CD4-positive, alpha-beta T cell (primary cell): ENCODE measurements at regions of chr4 and their contacts with region 1.

Region 1: GRCh38 chr4:3106339-3107186 is 32.1 kb downstream of the HTT start:
- DNase-seq: peak; percentile 64 to 92 (median 80)
- ATAC-seq: peak; percentile 99
- H3K4me3 ChIP-seq: no peak overlapping the region
- H3K4me3 Mint-ChIP-seq: no peak overlapping the region
- H3K27ac ChIP-seq: no peak overlapping the region
- H3K27ac Mint-ChIP-seq: peak overlapping the region; percentile 1
- H3K4me1 ChIP-seq: peaks cover 5% of the 10 kb centered on the region
- H3K4me1 Mint-ChIP-seq: peaks cover 7% of the 10 kb centered on the region
- H3K27me3 ChIP-seq: no peaks in the 10 kb centered on the region
- H3K27me3 Mint-ChIP-seq: no peaks in the 10 kb centered on the region
- CTCF ChIP-seq: peak; percentile 99

Region 2: GRCh38 chr4:3136453-3136852 is 29.9 kb after region 1 on chr4:
- CTCF ChIA-PET with region 1: interaction called, 4 read pairs
- POLR2A ChIA-PET with region 1: no interaction called
- intact Hi-C with region 1: loop called in 1 of 2 experiments (anchors 2 kb)
- DNase-seq: no peak
- ATAC-seq: no peak
- H3K4me3 ChIP-seq: no peak overlapping the region
- H3K4me3 Mint-ChIP-seq: no peak overlapping the region
- H3K27ac ChIP-seq: no peak overlapping the region
- H3K27ac Mint-ChIP-seq: no peak overlapping the region
- H3K4me1 ChIP-seq: no peaks in the 10 kb centered on the region
- H3K4me1 Mint-ChIP-seq: no peaks in the 10 kb centered on the region
- H3K27me3 ChIP-seq: no peaks in the 10 kb centered on the region
- H3K27me3 Mint-ChIP-seq: no peaks in the 10 kb centered on the region
- CTCF ChIP-seq: peak; percentile 38

Region 3: GRCh38 chr4:3193531-3194203 is 87.1 kb after region 1 on chr4:
- CTCF ChIA-PET with region 1: no interaction called
- POLR2A ChIA-PET with region 1: no interaction called
- intact Hi-C with region 1: loop called in 1 of 2 experiments (anchors 10 kb)
- DNase-seq: peak in 3 of 14 experiments; percentile 47 to 60 (median 48)
- ATAC-seq: peak; percentile 38
- H3K4me3 ChIP-seq: no peak overlapping the region
- H3K4me3 Mint-ChIP-seq: peak overlapping the region; percentile 16
- H3K27ac ChIP-seq: no peak overlapping the region
- H3K27ac Mint-ChIP-seq: peak overlapping the region; percentile 9
- H3K4me1 ChIP-seq: peaks cover 53% of the 10 kb centered on the region
- H3K4me1 Mint-ChIP-seq: peaks cover 58% of the 10 kb centered on the region
- H3K27me3 ChIP-seq: no peaks in the 10 kb centered on the region
- H3K27me3 Mint-ChIP-seq: no peaks in the 10 kb centered on the region
- CTCF ChIP-seq: peak; percentile 70

Region 4: GRCh38 chr4:3442959-3443749 is 336.6 kb after region 1 on chr4:
- CTCF ChIA-PET with region 1: no interaction called
- POLR2A ChIA-PET with region 1: no interaction called
- intact Hi-C with region 1: loop called in 1 of 2 experiments (anchors 1 kb)
- DNase-seq: peak; percentile 38 to 83 (median 58)
- ATAC-seq: peak; percentile 86
- H3K4me3 ChIP-seq: no peak overlapping the region
- H3K4me3 Mint-ChIP-seq: no peak overlapping the region
- H3K27ac ChIP-seq: no peak overlapping the region
- H3K27ac Mint-ChIP-seq: no peak overlapping the region
- H3K4me1 ChIP-seq: peaks cover 11% of the 10 kb centered on the region
- H3K4me1 Mint-ChIP-seq: no peaks in the 10 kb centered on the region
- H3K27me3 ChIP-seq: no peaks in the 10 kb centered on the region
- H3K27me3 Mint-ChIP-seq: no peaks in the 10 kb centered on the region
- CTCF ChIP-seq: peak; percentile 88

Region 5: DNA sequence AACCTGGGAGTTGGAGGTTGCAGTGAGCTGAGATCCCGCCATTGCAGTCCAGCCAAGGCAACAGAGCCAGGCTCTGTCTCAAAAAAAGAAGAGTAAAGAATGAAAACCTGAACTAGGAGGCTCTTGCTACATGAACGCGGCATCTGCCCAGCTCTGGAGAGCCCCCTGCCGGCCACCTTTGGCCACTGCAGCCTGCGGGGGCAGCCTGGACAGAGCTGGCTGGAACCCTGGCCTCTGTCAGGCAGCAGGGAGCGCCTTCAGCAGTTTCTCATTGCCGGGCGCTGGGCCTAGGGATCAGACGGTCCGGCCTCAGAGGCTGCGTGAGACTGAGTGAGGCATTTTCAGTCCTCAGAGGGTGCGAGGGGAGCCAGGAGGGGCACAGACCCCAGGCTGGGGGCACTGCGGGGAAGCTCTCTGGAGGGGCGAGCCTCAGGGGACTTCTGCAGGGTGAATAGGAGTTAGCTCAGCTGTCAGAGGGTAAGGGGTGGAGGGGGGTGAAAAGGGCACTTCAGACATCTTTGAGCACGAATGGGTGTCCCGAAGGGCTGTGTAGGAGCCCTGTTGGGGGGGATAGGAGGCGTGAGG is 374.1 kb after region 1 on chr4:
- CTCF ChIA-PET with region 1: interaction called, 3 read pairs
- POLR2A ChIA-PET with region 1: no interaction called
- intact Hi-C with region 1: loop called (anchors 1 kb)
- DNase-seq: peak; percentile 47 to 80 (median 66)
- ATAC-seq: peak; percentile 88
- H3K4me3 ChIP-seq: no peak overlapping the region
- H3K4me3 Mint-ChIP-seq: no peak overlapping the region
- H3K27ac ChIP-seq: no peak overlapping the region
- H3K27ac Mint-ChIP-seq: no peak overlapping the region
- H3K4me1 ChIP-seq: peaks cover 22% of the 10 kb centered on the region
- H3K4me1 Mint-ChIP-seq: no peaks in the 10 kb centered on the region
- H3K27me3 ChIP-seq: peaks cover 24 to 27% of the 10 kb centered on the region in 2 experiments
- H3K27me3 Mint-ChIP-seq: peaks cover 27% of the 10 kb centered on the region
- CTCF ChIP-seq: peak; percentile 94

Region 6: DNA sequence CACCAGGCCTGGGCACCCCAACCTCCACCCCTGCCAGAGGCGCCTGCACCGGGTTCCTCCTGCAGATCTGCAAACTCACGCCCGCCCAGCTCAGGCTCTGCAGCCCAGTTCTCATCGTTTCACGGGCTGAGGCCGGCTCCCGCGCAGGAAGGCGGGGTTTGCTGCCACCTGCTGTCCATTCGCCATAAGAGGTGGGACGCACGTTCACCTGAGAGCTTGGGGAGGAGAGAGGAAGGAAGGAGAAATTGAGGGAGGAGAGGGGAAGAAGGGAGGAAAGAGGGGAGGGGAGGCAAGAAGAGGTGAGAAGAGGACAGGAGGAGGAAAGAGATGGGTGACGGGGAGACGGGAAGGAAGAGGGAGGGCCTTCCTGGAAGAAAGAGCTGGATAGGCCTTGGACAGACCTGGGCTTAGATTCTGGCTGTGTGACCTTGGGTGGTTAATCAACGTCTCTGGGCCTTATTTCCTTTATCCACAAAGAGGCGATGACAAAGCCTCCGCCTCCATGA is 774.1 kb after region 1 on chr4:
- CTCF ChIA-PET with region 1: no interaction called
- POLR2A ChIA-PET with region 1: no interaction called
- intact Hi-C with region 1: loop called (anchors 1 kb)
- DNase-seq: peak; percentile 48 to 79 (median 60)
- ATAC-seq: peak; percentile 81
- H3K4me3 ChIP-seq: peak overlapping the region; percentile 34
- H3K4me3 Mint-ChIP-seq: peak overlapping the region; percentile 49
- H3K27ac ChIP-seq: no peak overlapping the region
- H3K27ac Mint-ChIP-seq: no peak overlapping the region
- H3K4me1 ChIP-seq: peaks cover 16% of the 10 kb centered on the region
- H3K4me1 Mint-ChIP-seq: peaks cover 19% of the 10 kb centered on the region
- H3K27me3 ChIP-seq: peaks cover 18 to 25% of the 10 kb centered on the region in 2 experiments
- H3K27me3 Mint-ChIP-seq: peaks cover 58% of the 10 kb centered on the region
- CTCF ChIP-seq: peak; percentile 52